ENCODE measurements at regions of chr1 and their contacts with region 1.

Region 1: DNA sequence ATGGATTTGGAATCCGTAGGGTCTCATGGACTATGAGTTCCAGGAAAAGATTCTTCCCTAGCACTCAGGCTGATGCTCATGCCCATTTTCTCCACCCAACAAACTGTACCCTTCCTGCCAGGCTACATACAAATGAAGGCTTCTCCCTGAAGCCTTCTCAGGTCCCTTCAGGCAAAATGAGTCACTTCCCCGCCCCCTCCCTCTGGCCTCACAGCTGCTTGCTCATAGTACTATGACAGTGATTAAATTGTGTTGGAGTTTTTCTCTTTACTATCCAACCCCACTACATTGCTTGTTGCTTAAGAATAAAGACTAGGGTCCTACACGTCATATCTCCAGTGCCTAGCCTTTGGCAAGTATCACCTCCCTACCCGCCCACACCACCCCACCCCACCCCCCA is 207.6 kb upstream of the NFIA start:
- DNase-seq: no peak
- ATAC-seq: peak in 3 of 8 donors; percentile 22 to 38 (median 37)
- H3K4me3 ChIP-seq: no peak overlapping the region
- H3K27ac ChIP-seq: no peak overlapping the region
- H3K4me1 ChIP-seq: no peaks in the 10 kb centered on the region
- H3K27me3 ChIP-seq: no peaks in the 10 kb centered on the region
- CTCF ChIP-seq: no peak

Region 2: GRCh38 chr1:59926381-59927123 is 948.2 kb before region 1 on chr1 and contains the start of gene CYP2J2:
- intact Hi-C with region 1: no loop called
- DNase-seq: peak; percentile 64 to 70
- ATAC-seq: peak; percentile 95 to 99 (median 98)
- H3K4me3 ChIP-seq: peak within 1 kb of the TSS; percentile 32 to 64 (median 58)
- H3K27ac ChIP-seq: peak within 1 kb of the TSS; percentile 23 to 97 (median 78)
- H3K4me1 ChIP-seq: peaks cover 0 to 11% (median 0%) of the 10 kb centered on the region in 9 donors
- H3K27me3 ChIP-seq: peaks cover 0 to 50% (median 21%) of the 10 kb centered on the region in 7 donors
- CTCF ChIP-seq: no peak
- total RNA-seq, gene CYP2J2: 24.0 to 212 (median 130) TPM

Region 3: GRCh38 chr1:60930130-60930529 is 55.4 kb after region 1 on chr1:
- intact Hi-C with region 1: loop called in 1 of 10 experiments (anchors 5 kb)
- DNase-seq: no peak
- ATAC-seq: no peak
- H3K4me3 ChIP-seq: no peak overlapping the region
- H3K27ac ChIP-seq: no peak overlapping the region
- H3K4me1 ChIP-seq: peaks cover 0 to 6% (median 5%) of the 10 kb centered on the region in 9 donors
- H3K27me3 ChIP-seq: no peaks in the 10 kb centered on the region
- CTCF ChIP-seq: no peak